WTC11 (cell line): ENCODE measurements at regions of chr16 and their contacts with region 1.

Region 1: DNA sequence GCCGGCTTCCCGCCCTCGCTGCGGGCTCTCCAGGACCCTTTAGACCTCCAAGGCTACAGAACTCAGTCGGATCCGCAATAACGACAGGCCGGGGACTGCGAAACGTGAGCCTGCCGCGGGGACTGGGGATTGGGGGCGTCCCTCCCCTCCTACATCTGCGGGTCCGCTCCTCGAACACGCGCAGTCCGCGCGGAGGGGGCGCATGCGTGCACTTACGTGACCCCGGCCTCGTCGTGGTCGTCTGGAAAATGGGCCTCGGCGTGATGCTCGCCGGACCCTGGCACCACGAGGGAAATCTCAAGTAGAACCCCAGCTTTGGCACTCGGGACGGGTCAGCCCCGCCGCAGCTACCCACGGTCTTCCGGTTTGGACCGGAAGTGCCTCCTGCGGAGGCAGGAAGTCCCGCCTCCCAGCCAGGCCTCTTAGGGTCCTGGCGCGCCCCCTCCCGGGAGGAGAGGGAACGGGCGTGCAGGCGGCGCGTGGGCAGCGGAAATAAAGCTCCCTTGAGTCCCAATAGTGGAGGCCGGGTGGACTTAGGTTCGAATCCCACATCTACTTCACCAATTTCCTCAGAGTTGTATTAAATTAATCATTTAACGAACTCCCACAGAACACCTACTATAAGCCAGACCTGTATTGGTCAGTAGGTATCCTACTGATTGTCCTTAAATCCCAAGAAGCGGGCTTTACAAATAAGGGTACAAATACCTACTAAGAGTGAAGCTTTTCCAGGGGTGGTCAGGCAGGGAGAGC is at the start of gene TAF1C:
- DNase-seq: peak; percentile 87
- ATAC-seq: peak; percentile 78
- H3K4me3 Mint-ChIP-seq: peak within 1 kb of the TSS; percentile 91
- H3K27ac Mint-ChIP-seq: peak within 1 kb of the TSS; percentile 60
- H3K4me1 Mint-ChIP-seq: peaks cover 9% of the 10 kb centered on the region; the same call in 1 of the 2 replicates
- H3K27me3 Mint-ChIP-seq: no peaks in the 10 kb centered on the region; the same call in none of the 2 replicates
- CTCF ChIP-seq: peak; percentile 78
- total RNA-seq, gene TAF1C: 71.2 to 89.7 TPM (median 74.7 TPM) in 3 replicates

Region 2: GRCh38 chr16:84144859-84145639 is 41.8 kb before region 1 on chr16 and contains the starts of genes DNAAF1 and HSDL1:
- CTCF ChIA-PET with region 1: interaction called, 18 read pairs
- POLR2A ChIA-PET with region 1: no interaction called
- DNase-seq: peak; percentile 93
- ATAC-seq: peak; percentile 71
- H3K4me3 Mint-ChIP-seq: peak within 1 kb of the TSS; percentile 98
- H3K27ac Mint-ChIP-seq: peak within 1 kb of the TSS; percentile 92
- H3K4me1 Mint-ChIP-seq: peaks cover 12% of the 10 kb centered on the region
- H3K27me3 Mint-ChIP-seq: peaks cover 13% of the 10 kb centered on the region
- CTCF ChIP-seq: no peak
- total RNA-seq, gene DNAAF1: 0.09 to 0.62 TPM (median 0.20 TPM) in 3 replicates
- total RNA-seq, gene HSDL1: 48.6 to 58.1 TPM (median 53.4 TPM) in 3 replicates

Region 3: GRCh38 chr16:84166796-84167695 is 19.8 kb before region 1 on chr16:
- CTCF ChIA-PET with region 1: interaction called, 41 read pairs
- POLR2A ChIA-PET with region 1: no interaction called
- DNase-seq: no peak
- ATAC-seq: peak; percentile 89
- H3K4me3 Mint-ChIP-seq: no peak overlapping the region
- H3K27ac Mint-ChIP-seq: no peak overlapping the region
- H3K4me1 Mint-ChIP-seq: no peaks in the 10 kb centered on the region
- H3K27me3 Mint-ChIP-seq: no peaks in the 10 kb centered on the region; the same call in 1 of the 2 replicates
- CTCF ChIP-seq: no peak

Region 4: DNA sequence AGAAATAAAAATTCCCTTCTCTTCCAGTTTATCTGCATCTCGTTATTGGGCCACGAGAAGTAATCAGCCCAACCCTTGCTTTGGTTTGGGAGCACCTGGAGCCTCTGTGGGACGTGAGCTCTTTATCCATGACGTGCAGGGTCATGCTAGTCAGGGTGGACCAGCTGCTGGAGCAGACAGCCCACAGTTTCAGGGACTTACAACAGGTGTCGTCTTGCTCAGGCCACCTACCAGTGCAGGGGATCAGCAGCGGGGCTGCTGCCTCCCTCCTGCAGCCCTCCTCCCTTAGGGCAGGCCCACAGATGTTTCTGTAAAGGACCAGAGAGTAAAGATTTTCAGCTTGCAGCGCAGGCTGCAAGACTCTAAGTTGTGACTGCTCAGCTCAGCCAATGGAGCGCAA is 21.0 kb after region 1 on chr16:
- CTCF ChIA-PET with region 1: interaction called, 14 read pairs
- POLR2A ChIA-PET with region 1: no interaction called
- DNase-seq: no peak
- ATAC-seq: peak; percentile 41; the same call in 1 of the 2 replicates
- H3K4me3 Mint-ChIP-seq: no peak overlapping the region
- H3K27ac Mint-ChIP-seq: no peak overlapping the region
- H3K4me1 Mint-ChIP-seq: peaks cover 4% of the 10 kb centered on the region
- H3K27me3 Mint-ChIP-seq: no peaks in the 10 kb centered on the region
- CTCF ChIP-seq: no peak

Region 5: DNA sequence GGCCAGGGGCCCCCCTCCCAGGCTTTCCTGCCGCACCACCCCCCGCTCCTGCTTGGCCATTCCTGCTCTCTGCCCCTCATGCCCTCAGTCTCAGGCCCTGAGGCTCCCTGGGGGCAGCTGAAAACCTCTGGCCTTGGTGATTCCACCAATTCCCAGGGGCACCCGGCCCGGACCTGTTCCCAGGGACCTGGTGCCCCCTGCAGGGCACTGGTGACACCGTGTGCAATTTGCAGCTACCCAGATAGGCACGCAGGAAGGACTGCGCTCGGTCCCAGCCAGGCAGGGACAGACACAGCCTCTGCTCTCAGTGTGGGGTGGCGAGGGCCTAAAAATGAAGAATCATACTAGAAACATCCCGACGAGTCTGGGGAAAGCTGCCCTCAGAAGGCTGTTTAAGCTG is 121.3 kb after region 1 on chr16:
- CTCF ChIA-PET with region 1: interaction called, 20 read pairs
- POLR2A ChIA-PET with region 1: no interaction called
- DNase-seq: peak; percentile 79
- ATAC-seq: peak; percentile 79
- H3K4me3 Mint-ChIP-seq: no peak overlapping the region
- H3K27ac Mint-ChIP-seq: no peak overlapping the region
- H3K4me1 Mint-ChIP-seq: peaks cover 14% of the 10 kb centered on the region
- H3K27me3 Mint-ChIP-seq: peaks cover 5% of the 10 kb centered on the region
- CTCF ChIP-seq: peak; percentile 32; the same call in 1 of the 2 replicates